Caco-2 (cell line): ENCODE measurements at regions of chr12 and their contacts with region 1.

Region 1: GRCh38 chr12:59087077-59087673 is 166.9 kb upstream of the LRIG3 start:
- DNase-seq: no peak
- H3K4me3 ChIP-seq: no peak overlapping the region
- H3K4me3 Mint-ChIP-seq: no peak overlapping the region
- H3K27ac Mint-ChIP-seq: no peak overlapping the region
- H3K4me1 ChIP-seq: no peaks in the 10 kb centered on the region
- H3K4me1 Mint-ChIP-seq: no peaks in the 10 kb centered on the region
- H3K27me3 ChIP-seq: no peaks in the 10 kb centered on the region
- H3K27me3 Mint-ChIP-seq: no peaks in the 10 kb centered on the region
- CTCF ChIP-seq: peak in 1 of 2 experiments; percentile 14

Region 2: GRCh38 chr12:58814036-58814435 is 273.1 kb before region 1 on chr12:
- CTCF ChIA-PET with region 1: no interaction called
- POLR2A ChIA-PET with region 1: no interaction called
- intact Hi-C with region 1: loop called (anchors 10 kb)
- DNase-seq: no peak
- H3K4me3 ChIP-seq: no peak overlapping the region
- H3K4me3 Mint-ChIP-seq: no peak overlapping the region
- H3K27ac Mint-ChIP-seq: no peak overlapping the region
- H3K4me1 ChIP-seq: no peaks in the 10 kb centered on the region
- H3K4me1 Mint-ChIP-seq: peaks cover 9% of the 10 kb centered on the region
- H3K27me3 ChIP-seq: no peaks in the 10 kb centered on the region
- H3K27me3 Mint-ChIP-seq: no peaks in the 10 kb centered on the region
- CTCF ChIP-seq: no peak